Uterus (tissue), 4 donors: ENCODE measurements at regions of chr1 and their contacts with region 1.

Region 1: DNA sequence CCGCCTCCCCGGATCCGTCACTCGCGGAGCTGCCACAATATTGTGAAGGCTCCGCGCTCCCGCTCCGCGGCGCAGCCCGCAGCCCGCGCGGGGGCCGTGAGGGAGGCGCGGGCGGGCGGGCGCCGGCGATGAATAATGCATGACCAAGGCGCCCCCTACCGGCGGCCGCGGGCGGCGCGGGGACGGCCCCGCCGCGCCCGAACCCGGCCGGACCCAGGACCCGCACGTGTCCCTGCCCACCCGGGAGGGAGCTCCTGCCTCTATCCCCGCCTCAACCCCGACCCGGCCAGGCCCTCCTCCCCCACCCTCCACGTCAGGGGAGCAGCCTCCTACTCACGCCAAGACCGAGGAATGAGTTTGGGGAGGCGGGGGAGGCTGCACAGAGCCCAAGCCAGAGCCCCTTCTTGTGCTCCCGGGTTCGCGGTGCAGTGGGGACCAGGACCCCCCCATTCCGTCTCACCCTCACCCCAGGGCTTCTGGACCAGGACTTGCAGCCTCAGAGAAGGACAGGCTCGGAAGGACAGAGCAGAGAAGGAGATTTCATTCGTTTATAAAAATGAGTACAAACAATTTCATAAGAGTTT is 70.8 kb upstream of the CASZ1 start:
- DNase-seq: peak; percentile 43 to 62
- H3K4me3 ChIP-seq: peak overlapping the region; percentile 29 to 47
- H3K27ac ChIP-seq: no peak overlapping the region
- H3K4me1 ChIP-seq: peaks cover 0 to 12% of the 10 kb centered on the region in 2 donors
- H3K27me3 ChIP-seq: no peaks in the 10 kb centered on the region
- CTCF ChIP-seq: peak; percentile 43 to 90 (median 84)
- POLR2A ChIP-seq: no peak

Region 2: GRCh38 chr1:10507111-10507879 is 359.9 kb before region 1 on chr1:
- intact Hi-C with region 1: loop called (anchors 5 kb)
- DNase-seq: peak; percentile 37 to 63
- H3K4me3 ChIP-seq: no peak overlapping the region
- H3K27ac ChIP-seq: no peak overlapping the region
- H3K4me1 ChIP-seq: peaks cover 0 to 8% of the 10 kb centered on the region in 2 donors
- H3K27me3 ChIP-seq: no peaks in the 10 kb centered on the region
- CTCF ChIP-seq: peak; percentile 72 to 91 (median 80)
- POLR2A ChIP-seq: no peak

Region 3: GRCh38 chr1:10628685-10629084 is 238.5 kb before region 1 on chr1:
- intact Hi-C with region 1: no loop called
- DNase-seq: peak; percentile 74 to 76
- H3K4me3 ChIP-seq: no peak overlapping the region
- H3K27ac ChIP-seq: peak overlapping the region; percentile 50 to 65
- H3K4me1 ChIP-seq: no peaks in the 10 kb centered on the region
- H3K27me3 ChIP-seq: no peaks in the 10 kb centered on the region
- CTCF ChIP-seq: no peak
- POLR2A ChIP-seq: no peak